ENCODE measurements at regions of chr2 and their contacts with region 1.

Region 1: DNA sequence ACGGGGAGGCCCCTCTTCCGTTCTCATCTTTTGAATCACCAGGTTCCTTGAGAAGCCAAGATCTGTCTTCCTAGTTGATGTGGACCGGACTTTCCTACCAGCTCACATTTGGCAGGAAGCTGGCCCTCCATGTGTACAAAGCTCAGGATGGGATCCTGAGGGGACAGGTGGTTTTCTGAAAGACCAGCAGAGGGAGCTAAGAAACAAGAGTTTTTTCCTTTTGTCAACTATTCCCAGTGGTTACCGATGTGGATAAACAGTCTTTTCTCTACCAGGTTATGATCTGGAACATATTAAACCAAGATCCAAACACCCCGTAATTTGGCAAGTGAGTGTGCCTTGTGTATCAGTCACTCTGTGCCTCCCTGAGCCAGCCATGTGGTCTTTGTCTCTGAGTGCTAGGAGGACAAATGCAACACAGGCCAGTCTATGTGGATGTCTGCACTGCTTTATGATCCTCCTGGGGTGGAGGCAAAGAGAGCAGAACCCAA is 25.1 kb upstream of the ARHGAP25 start:
- DNase-seq: peak in 2 of 9 experiments; percentile 50 to 62
- ATAC-seq: peak; percentile 58
- H3K4me3 ChIP-seq: no peak overlapping the region
- H3K4me3 Mint-ChIP-seq: no peak overlapping the region
- H3K27ac ChIP-seq: no peak overlapping the region
- H3K27ac Mint-ChIP-seq: no peak overlapping the region
- H3K4me1 ChIP-seq: no peaks in the 10 kb centered on the region
- H3K4me1 Mint-ChIP-seq: peaks cover 8% of the 10 kb centered on the region
- H3K27me3 ChIP-seq: no peaks in the 10 kb centered on the region
- H3K27me3 Mint-ChIP-seq: no peaks in the 10 kb centered on the region
- CTCF ChIP-seq: peak; percentile 76

Region 2: GRCh38 chr2:68689553-68690537 is 19.6 kb before region 1 on chr2:
- CTCF ChIA-PET with region 1: interaction called, 18 read pairs
- POLR2A ChIA-PET with region 1: no interaction called
- intact Hi-C with region 1: no loop called
- DNase-seq: peak in 1 of 9 experiments; percentile 13
- ATAC-seq: no peak
- H3K4me3 ChIP-seq: no peak overlapping the region
- H3K4me3 Mint-ChIP-seq: no peak overlapping the region
- H3K27ac ChIP-seq: no peak overlapping the region
- H3K27ac Mint-ChIP-seq: no peak overlapping the region
- H3K4me1 ChIP-seq: no peaks in the 10 kb centered on the region
- H3K4me1 Mint-ChIP-seq: peaks cover 5% of the 10 kb centered on the region
- H3K27me3 ChIP-seq: no peaks in the 10 kb centered on the region
- H3K27me3 Mint-ChIP-seq: peaks cover 6% of the 10 kb centered on the region
- CTCF ChIP-seq: no peak

Region 3: GRCh38 chr2:68726608-68727367 is 17.3 kb after region 1 on chr2:
- CTCF ChIA-PET with region 1: interaction called, 70 read pairs
- POLR2A ChIA-PET with region 1: no interaction called
- intact Hi-C with region 1: loop called in 1 of 2 experiments (anchors 1 kb)
- DNase-seq: peak; percentile 48 to 92 (median 81)
- ATAC-seq: peak; percentile 98
- H3K4me3 ChIP-seq: no peak overlapping the region
- H3K4me3 Mint-ChIP-seq: peak overlapping the region; percentile 22
- H3K27ac ChIP-seq: peak overlapping the region in 1 of 2 experiments; percentile 60
- H3K27ac Mint-ChIP-seq: peak overlapping the region; percentile 82
- H3K4me1 ChIP-seq: peaks cover 37% of the 10 kb centered on the region
- H3K4me1 Mint-ChIP-seq: peaks cover 54% of the 10 kb centered on the region
- H3K27me3 ChIP-seq: no peaks in the 10 kb centered on the region
- H3K27me3 Mint-ChIP-seq: no peaks in the 10 kb centered on the region
- CTCF ChIP-seq: no peak

Region 4: GRCh38 chr2:68742626-68743415 is 33.4 kb after region 1 on chr2:
- CTCF ChIA-PET with region 1: interaction called, 60 read pairs
- POLR2A ChIA-PET with region 1: interaction called, 3 read pairs
- intact Hi-C with region 1: no loop called
- DNase-seq: peak in 3 of 9 experiments; percentile 3 to 35 (median 11)
- ATAC-seq: no peak
- H3K4me3 ChIP-seq: no peak overlapping the region
- H3K4me3 Mint-ChIP-seq: peak overlapping the region; percentile 17
- H3K27ac ChIP-seq: peak overlapping the region in 1 of 2 experiments; percentile 18
- H3K27ac Mint-ChIP-seq: peak overlapping the region; percentile 42
- H3K4me1 ChIP-seq: peaks cover 82% of the 10 kb centered on the region
- H3K4me1 Mint-ChIP-seq: peaks cover 90% of the 10 kb centered on the region
- H3K27me3 ChIP-seq: no peaks in the 10 kb centered on the region
- H3K27me3 Mint-ChIP-seq: no peaks in the 10 kb centered on the region
- CTCF ChIP-seq: no peak

Region 5: DNA sequence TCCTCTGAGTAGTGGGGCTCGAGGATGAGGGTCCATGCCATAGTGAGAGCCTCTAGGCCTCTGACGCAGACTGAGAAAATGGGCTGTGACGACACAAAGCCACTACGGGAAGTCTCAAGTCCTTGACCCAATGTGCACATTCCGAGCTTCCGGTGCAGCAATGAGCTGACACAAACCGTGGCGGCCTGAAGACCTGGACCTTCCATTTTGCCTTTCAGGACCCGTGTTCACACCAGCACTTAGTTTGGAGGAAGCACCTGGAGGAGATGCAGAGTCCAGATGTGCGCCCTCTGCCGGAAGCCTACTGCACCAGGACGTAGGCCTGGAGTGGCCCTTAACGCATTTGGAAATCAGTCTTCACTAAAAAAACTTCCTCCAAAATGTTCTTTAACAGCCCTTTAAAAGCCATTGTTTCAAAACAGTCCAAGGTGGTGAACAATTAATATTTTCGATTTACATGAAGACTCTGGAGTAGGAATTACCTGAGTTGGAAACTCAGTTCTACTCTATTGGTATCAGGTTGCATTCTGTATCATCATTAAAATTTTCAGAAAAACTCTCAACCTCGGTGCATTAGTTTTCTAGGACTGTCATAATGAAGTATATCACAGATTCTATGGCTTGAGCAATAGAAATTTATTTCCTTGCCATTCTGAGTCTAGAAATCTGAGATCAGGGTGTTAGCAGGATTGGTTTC is 127.8 kb after region 1 on chr2:
- CTCF ChIA-PET with region 1: interaction called, 18 read pairs
- POLR2A ChIA-PET with region 1: interaction called, 3 read pairs
- intact Hi-C with region 1: loop called in 1 of 2 experiments (anchors 1 kb)
- DNase-seq: peak; percentile 39 to 83 (median 73)
- ATAC-seq: peak; percentile 74
- H3K4me3 ChIP-seq: no peak overlapping the region
- H3K4me3 Mint-ChIP-seq: no peak overlapping the region
- H3K27ac ChIP-seq: no peak overlapping the region
- H3K27ac Mint-ChIP-seq: no peak overlapping the region
- H3K4me1 ChIP-seq: peaks cover 8% of the 10 kb centered on the region
- H3K4me1 Mint-ChIP-seq: peaks cover 23% of the 10 kb centered on the region
- H3K27me3 ChIP-seq: no peaks in the 10 kb centered on the region
- H3K27me3 Mint-ChIP-seq: no peaks in the 10 kb centered on the region
- CTCF ChIP-seq: peak; percentile 82

Region 6: DNA sequence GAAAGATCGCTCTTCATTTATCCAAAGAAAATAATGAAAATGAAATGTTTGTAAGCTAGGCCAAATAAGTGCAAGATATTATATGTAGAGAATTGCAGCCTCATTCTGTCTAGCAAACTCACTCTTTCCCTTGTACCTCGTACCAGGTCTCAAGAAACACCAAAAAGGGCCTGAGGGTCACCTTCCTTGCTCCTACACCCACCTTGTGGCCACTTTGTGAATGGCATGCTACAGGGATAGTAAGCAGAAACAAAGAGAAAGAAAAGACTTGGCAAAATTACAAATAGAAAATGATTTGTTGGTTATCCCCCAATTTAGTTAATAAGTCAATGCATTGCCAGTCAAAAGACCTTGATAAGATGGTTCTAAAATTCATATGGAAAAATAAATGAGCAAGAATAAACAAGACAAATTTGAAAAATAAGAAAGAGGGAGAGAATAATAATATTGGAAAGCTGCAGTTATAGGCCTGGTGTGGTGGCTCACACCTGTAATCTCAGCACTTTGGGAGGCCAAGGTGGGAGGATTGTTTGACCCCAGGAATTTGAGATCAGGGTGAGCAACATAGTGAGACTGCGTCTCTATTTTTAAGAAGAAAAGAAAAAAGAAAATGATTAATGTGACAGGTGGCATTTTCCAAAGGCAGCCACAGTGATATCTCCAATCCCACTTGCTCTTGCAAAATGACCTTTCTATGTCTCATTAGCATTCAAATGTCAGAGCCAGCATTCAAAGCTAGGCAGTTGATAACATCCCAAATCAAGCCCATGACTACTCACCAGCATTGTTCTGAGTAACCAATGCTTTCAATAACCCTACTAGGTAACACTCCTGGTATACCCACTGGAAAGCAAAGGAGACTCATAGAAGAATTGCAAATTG is 200.6 kb after region 1 on chr2:
- CTCF ChIA-PET with region 1: interaction called, 78 read pairs
- POLR2A ChIA-PET with region 1: interaction called, 4 read pairs
- intact Hi-C with region 1: loop called in 1 of 2 experiments (anchors 1 kb)
- DNase-seq: peak; percentile 36 to 82 (median 70)
- ATAC-seq: peak; percentile 21
- H3K4me3 ChIP-seq: no peak overlapping the region
- H3K4me3 Mint-ChIP-seq: no peak overlapping the region
- H3K27ac ChIP-seq: no peak overlapping the region
- H3K27ac Mint-ChIP-seq: peak overlapping the region; percentile 42
- H3K4me1 ChIP-seq: peaks cover 34% of the 10 kb centered on the region
- H3K4me1 Mint-ChIP-seq: peaks cover 34% of the 10 kb centered on the region
- H3K27me3 ChIP-seq: no peaks in the 10 kb centered on the region
- H3K27me3 Mint-ChIP-seq: no peaks in the 10 kb centered on the region
- CTCF ChIP-seq: peak; percentile 98

Region 7: GRCh38 chr2:68925295-68925896 is 215.9 kb after region 1 on chr2:
- CTCF ChIA-PET with region 1: interaction called, 155 read pairs
- POLR2A ChIA-PET with region 1: interaction called, 5 read pairs
- intact Hi-C with region 1: loop called (anchors 1 kb)
- DNase-seq: peak; percentile 18 to 80 (median 56)
- ATAC-seq: peak; percentile 87
- H3K4me3 ChIP-seq: no peak overlapping the region
- H3K4me3 Mint-ChIP-seq: no peak overlapping the region
- H3K27ac ChIP-seq: no peak overlapping the region
- H3K27ac Mint-ChIP-seq: no peak overlapping the region
- H3K4me1 ChIP-seq: no peaks in the 10 kb centered on the region
- H3K4me1 Mint-ChIP-seq: no peaks in the 10 kb centered on the region
- H3K27me3 ChIP-seq: no peaks in the 10 kb centered on the region
- H3K27me3 Mint-ChIP-seq: peaks cover 2% of the 10 kb centered on the region
- CTCF ChIP-seq: peak; percentile 98

Measured in CD8-positive, alpha-beta T cell (primary cell).